Activated naive CD4-positive, alpha-beta T cell treated with anti-CD3 and anti-CD28 coated beads for 36 hours (primary cell): ENCODE measurements at regions of chr15 and their contacts with region 1.

Region 1: GRCh38 chr15:28123408-28124023 is 24.4 kb upstream of the OCA2 start:
- DNase-seq: peak; percentile 60
- H3K4me3 Mint-ChIP-seq: no peak overlapping the region
- H3K27ac Mint-ChIP-seq: no peak overlapping the region
- H3K4me1 Mint-ChIP-seq: no peaks in the 10 kb centered on the region
- H3K27me3 Mint-ChIP-seq: no peaks in the 10 kb centered on the region

Region 2: DNA sequence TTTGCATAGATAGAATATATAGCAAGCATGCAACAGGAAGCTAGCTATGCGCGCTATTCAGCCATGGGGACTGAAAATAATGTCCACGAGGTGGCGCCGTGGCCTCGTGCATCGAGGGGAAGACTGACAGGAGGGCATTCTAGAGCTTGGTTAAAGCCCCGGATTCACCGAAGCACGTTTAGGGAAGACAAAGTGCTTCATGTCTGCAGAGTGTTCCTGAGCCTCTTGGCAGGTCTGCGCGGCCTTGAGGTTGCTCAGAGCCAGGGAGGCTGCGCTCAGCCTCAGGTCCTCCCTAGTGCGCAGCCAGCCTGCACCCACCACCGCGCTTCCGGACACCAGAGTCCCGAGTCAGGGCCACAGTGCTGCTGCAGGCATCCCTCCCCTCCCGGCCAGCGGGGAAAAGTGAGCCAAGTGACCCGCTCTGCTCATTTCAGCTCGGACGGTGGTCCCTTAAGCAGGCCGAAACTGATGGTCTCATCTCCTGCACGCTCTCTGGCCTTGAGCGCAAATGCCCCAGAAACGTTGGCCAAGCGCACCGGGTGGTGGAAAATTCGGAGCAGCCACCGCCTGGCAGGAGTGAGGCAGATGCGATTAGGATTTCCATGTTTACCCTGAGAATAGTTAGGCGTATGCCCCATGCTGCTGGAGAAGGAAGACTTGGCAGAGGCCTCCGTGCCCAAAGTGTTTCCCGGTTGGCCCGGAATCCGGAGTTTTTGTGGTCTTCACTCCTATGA is 1231.9 kb before region 1 on chr15:
- CTCF ChIA-PET with region 1: no interaction called
- intact Hi-C with region 1: loop called (anchors 5 kb)
- DNase-seq: peak; percentile 77
- H3K4me3 Mint-ChIP-seq: no peak overlapping the region
- H3K27ac Mint-ChIP-seq: no peak overlapping the region
- H3K4me1 Mint-ChIP-seq: peaks cover 4% of the 10 kb centered on the region
- H3K27me3 Mint-ChIP-seq: peaks cover 30% of the 10 kb centered on the region

Region 3: GRCh38 chr15:28086175-28086703 is 37.3 kb before region 1 on chr15:
- CTCF ChIA-PET with region 1: interaction called, 4 read pairs
- intact Hi-C with region 1: loop called (anchors 1 kb)
- DNase-seq: peak; percentile 63
- H3K4me3 Mint-ChIP-seq: no peak overlapping the region
- H3K27ac Mint-ChIP-seq: no peak overlapping the region
- H3K4me1 Mint-ChIP-seq: peaks cover 5% of the 10 kb centered on the region
- H3K27me3 Mint-ChIP-seq: peaks cover 36% of the 10 kb centered on the region

Region 4: GRCh38 chr15:28726102-28726501 is 602.6 kb after region 1 on chr15:
- CTCF ChIA-PET with region 1: no interaction called
- intact Hi-C with region 1: loop called (anchors 5 kb)
- DNase-seq: no peak
- H3K4me3 Mint-ChIP-seq: no peak overlapping the region
- H3K27ac Mint-ChIP-seq: no peak overlapping the region
- H3K4me1 Mint-ChIP-seq: peaks cover 10% of the 10 kb centered on the region
- H3K27me3 Mint-ChIP-seq: no peaks in the 10 kb centered on the region

Region 5: DNA sequence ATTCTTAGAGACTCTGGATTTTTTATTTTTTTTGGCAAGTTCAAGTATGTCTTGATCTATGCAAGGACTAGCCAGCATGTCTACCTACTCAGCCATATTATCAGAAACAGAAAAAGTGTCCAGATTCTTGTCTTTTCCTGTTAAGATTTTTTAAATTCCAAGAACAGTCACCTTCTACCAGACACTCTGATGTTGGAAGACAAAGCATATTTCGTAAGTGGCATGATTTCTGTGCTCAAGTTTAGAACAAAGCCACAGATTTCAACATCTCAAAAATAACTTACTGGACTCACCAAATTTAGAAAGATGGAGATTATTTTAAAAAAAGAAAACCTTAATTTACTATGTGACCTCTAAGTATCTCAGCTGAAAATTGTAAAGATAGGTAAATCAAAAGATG is 663.0 kb after region 1 on chr15:
- CTCF ChIA-PET with region 1: no interaction called
- intact Hi-C with region 1: loop called (anchors 10 kb)
- DNase-seq: no peak
- H3K4me3 Mint-ChIP-seq: no peak overlapping the region
- H3K27ac Mint-ChIP-seq: no peak overlapping the region
- H3K4me1 Mint-ChIP-seq: peaks cover 6% of the 10 kb centered on the region
- H3K27me3 Mint-ChIP-seq: peaks cover 12% of the 10 kb centered on the region